CD8-positive, alpha-beta T cell (primary cell): ENCODE measurements at regions of chr20 and their contacts with region 1.

Region 1: GRCh38 chr20:59403261-59403961 is 103.0 kb downstream of the EDN3 start:
- DNase-seq: peak; percentile 57 to 91 (median 73)
- ATAC-seq: peak; percentile 84
- H3K4me3 ChIP-seq: peak overlapping the region; percentile 10 to 47
- H3K4me3 Mint-ChIP-seq: no peak overlapping the region
- H3K27ac ChIP-seq: peak overlapping the region in 1 of 2 experiments; percentile 21
- H3K27ac Mint-ChIP-seq: peak overlapping the region; percentile 81
- H3K4me1 ChIP-seq: peaks cover 38% of the 10 kb centered on the region
- H3K4me1 Mint-ChIP-seq: peaks cover 4% of the 10 kb centered on the region
- H3K27me3 ChIP-seq: peaks cover 7 to 13% of the 10 kb centered on the region in 2 experiments
- H3K27me3 Mint-ChIP-seq: peaks cover 8% of the 10 kb centered on the region
- CTCF ChIP-seq: peak; percentile 99

Region 2: GRCh38 chr20:58481481-58482021 is 921.9 kb before region 1 on chr20:
- CTCF ChIA-PET with region 1: no interaction called
- POLR2A ChIA-PET with region 1: no interaction called
- intact Hi-C with region 1: loop called in 1 of 2 experiments (anchors 5 kb)
- DNase-seq: peak; percentile 24 to 70 (median 49)
- ATAC-seq: peak; percentile 63
- H3K4me3 ChIP-seq: no peak overlapping the region
- H3K4me3 Mint-ChIP-seq: no peak overlapping the region
- H3K27ac ChIP-seq: no peak overlapping the region
- H3K27ac Mint-ChIP-seq: no peak overlapping the region
- H3K4me1 ChIP-seq: no peaks in the 10 kb centered on the region
- H3K4me1 Mint-ChIP-seq: peaks cover 2% of the 10 kb centered on the region
- H3K27me3 ChIP-seq: no peaks in the 10 kb centered on the region
- H3K27me3 Mint-ChIP-seq: peaks cover 13% of the 10 kb centered on the region
- CTCF ChIP-seq: no peak

Region 3: DNA sequence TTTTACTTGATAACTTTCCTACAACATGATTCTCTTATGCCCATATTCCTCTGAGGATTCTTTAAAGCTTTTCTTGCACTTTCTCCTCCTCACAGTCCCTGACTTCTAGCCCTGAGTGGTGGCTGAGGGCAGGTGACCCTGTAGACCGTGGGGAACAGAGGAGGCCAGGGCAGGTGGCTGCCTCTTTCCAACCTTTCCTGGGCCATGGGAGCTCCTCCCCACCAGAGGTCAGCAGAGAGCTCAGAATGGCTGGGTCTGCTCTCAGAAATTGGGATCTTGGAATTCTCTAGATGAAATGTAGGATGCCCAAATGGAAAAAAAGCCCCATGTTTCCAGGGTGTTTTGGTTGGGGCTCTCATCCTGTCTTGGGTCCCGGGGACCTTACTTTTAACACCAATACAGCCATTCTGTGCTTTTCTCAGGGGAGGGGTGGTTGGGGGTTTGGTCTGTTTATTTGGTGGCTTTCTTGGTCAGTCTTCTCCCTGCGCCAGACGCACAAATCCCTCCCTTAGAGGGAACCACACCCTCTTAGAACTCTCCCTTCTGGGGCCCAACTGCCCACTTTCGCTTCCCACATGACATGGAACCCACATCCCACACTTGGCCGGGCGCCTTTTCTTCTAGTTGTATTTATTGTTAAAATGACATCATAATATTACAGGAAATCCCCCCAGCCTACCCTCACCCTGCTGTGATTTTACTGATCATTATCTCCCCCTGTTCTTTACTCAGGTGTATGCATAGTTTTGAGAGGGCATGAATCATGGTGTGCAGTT is 533.0 kb before region 1 on chr20:
- CTCF ChIA-PET with region 1: interaction called, 25 read pairs
- POLR2A ChIA-PET with region 1: no interaction called
- intact Hi-C with region 1: loop called (anchors 1 kb)
- DNase-seq: peak in 7 of 9 experiments; percentile 27 to 75 (median 65)
- ATAC-seq: peak; percentile 81
- H3K4me3 ChIP-seq: no peak overlapping the region
- H3K4me3 Mint-ChIP-seq: no peak overlapping the region
- H3K27ac ChIP-seq: no peak overlapping the region
- H3K27ac Mint-ChIP-seq: no peak overlapping the region
- H3K4me1 ChIP-seq: no peaks in the 10 kb centered on the region
- H3K4me1 Mint-ChIP-seq: peaks cover 5% of the 10 kb centered on the region
- H3K27me3 ChIP-seq: no peaks in the 10 kb centered on the region
- H3K27me3 Mint-ChIP-seq: no peaks in the 10 kb centered on the region
- CTCF ChIP-seq: peak; percentile 73

Region 4: GRCh38 chr20:59082077-59082740 is 321.2 kb before region 1 on chr20:
- CTCF ChIA-PET with region 1: interaction called, 54 read pairs
- POLR2A ChIA-PET with region 1: no interaction called
- intact Hi-C with region 1: loop called in 1 of 2 experiments (anchors 1 kb)
- DNase-seq: peak in 2 of 9 experiments; percentile 27 to 43
- ATAC-seq: no peak
- H3K4me3 ChIP-seq: no peak overlapping the region
- H3K4me3 Mint-ChIP-seq: no peak overlapping the region
- H3K27ac ChIP-seq: no peak overlapping the region
- H3K27ac Mint-ChIP-seq: no peak overlapping the region
- H3K4me1 ChIP-seq: no peaks in the 10 kb centered on the region
- H3K4me1 Mint-ChIP-seq: no peaks in the 10 kb centered on the region
- H3K27me3 ChIP-seq: peaks cover 0 to 4% of the 10 kb centered on the region in 2 experiments
- H3K27me3 Mint-ChIP-seq: peaks cover 3% of the 10 kb centered on the region
- CTCF ChIP-seq: peak; percentile 64

Region 5: DNA sequence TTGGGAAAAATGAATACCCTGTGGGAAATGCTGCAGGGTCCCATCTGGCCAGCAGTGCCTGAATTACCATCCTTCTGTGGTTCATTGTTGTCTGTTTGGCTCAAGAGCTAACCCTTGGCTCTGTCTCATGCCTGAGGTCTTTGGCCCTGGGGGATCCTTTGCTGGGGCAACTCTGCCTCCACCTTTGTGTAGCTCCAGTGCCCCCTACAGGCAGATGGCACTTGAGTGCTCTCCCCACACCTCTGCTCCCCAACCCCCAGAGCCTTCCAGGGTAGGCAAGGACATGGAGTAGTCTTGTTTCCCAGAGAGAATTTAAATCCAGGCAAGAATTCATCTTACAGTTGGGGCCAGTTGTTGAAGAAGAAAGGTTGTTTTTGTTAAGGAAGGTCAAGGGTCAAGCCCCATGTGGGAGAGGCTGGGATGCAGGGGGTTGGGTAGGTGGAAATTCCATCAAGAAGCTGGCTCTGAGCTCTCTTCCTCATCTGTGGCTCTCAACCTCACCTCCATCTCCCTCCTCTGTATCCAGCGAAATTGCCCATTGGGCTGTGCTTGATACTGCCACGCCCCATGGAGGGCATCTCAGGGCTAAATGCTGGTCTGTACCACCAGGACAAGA is 195.6 kb before region 1 on chr20:
- CTCF ChIA-PET with region 1: interaction called, 48 read pairs
- POLR2A ChIA-PET with region 1: no interaction called
- intact Hi-C with region 1: loop called in 1 of 2 experiments (anchors 5 kb)
- DNase-seq: peak; percentile 66 to 90 (median 86)
- ATAC-seq: peak; percentile 96
- H3K4me3 ChIP-seq: no peak overlapping the region
- H3K4me3 Mint-ChIP-seq: no peak overlapping the region
- H3K27ac ChIP-seq: no peak overlapping the region
- H3K27ac Mint-ChIP-seq: peak overlapping the region; percentile 76
- H3K4me1 ChIP-seq: peaks cover 25% of the 10 kb centered on the region
- H3K4me1 Mint-ChIP-seq: peaks cover 37% of the 10 kb centered on the region
- H3K27me3 ChIP-seq: no peaks in the 10 kb centered on the region
- H3K27me3 Mint-ChIP-seq: no peaks in the 10 kb centered on the region
- CTCF ChIP-seq: peak; percentile 93

Region 6: DNA sequence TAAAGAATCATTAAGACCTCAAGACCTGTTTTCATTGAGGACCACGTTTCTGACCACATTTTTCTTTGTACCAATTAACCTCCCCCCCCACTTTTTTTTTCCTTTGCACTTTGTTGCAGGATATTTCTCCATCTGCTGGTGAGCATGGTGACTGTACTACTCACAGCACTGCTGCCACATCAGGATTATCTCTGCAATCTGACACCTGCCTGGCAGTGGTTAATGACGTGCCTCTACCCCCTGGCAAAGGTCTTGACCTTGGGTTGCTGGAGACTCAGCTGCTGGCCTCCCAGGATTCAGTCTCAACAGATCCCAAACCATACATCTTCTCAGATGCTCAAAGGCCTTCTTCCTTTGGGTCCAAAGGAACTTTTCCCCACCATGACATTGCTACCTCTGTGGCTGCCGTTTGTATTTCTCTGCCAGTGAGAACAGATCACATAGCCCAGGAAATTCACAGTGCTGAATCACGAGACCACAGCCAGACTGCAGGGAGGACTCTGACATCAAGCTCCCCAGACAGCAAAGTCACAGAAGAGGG is 149.6 kb before region 1 on chr20:
- CTCF ChIA-PET with region 1: interaction called, 5 read pairs
- POLR2A ChIA-PET with region 1: interaction called, 4 read pairs
- intact Hi-C with region 1: loop called in 1 of 2 experiments (anchors 2 kb)
- DNase-seq: peak in 7 of 9 experiments; percentile 26 to 70 (median 40)
- ATAC-seq: peak; percentile 61
- H3K4me3 ChIP-seq: peak overlapping the region in 1 of 2 experiments; percentile 18
- H3K4me3 Mint-ChIP-seq: peak overlapping the region; percentile 75
- H3K27ac ChIP-seq: peak overlapping the region; percentile 57 to 59
- H3K27ac Mint-ChIP-seq: peak overlapping the region; percentile 98
- H3K4me1 ChIP-seq: peaks cover 53% of the 10 kb centered on the region
- H3K4me1 Mint-ChIP-seq: peaks cover 74% of the 10 kb centered on the region
- H3K27me3 ChIP-seq: no peaks in the 10 kb centered on the region
- H3K27me3 Mint-ChIP-seq: no peaks in the 10 kb centered on the region
- CTCF ChIP-seq: no peak

Region 7: DNA sequence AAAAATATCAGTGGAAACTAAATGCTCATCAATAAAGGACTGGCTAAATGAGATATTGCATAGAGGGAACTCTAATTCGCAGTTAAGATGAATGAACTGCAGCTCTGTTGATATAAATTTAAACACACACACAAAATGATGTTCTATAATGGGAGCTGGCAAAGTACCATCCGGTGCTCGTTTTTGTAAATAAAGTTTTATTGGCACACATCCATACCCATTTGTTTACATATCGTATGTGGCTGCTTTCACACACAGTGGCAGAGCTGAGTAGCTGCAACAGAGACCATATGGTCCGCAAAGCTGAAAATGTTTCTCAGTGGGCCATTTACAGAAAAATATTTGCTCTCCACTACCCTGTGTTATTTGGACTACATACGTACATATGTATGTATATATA is 17.7 kb after region 1 on chr20:
- CTCF ChIA-PET with region 1: interaction called, 12 read pairs
- POLR2A ChIA-PET with region 1: no interaction called
- intact Hi-C with region 1: no loop called
- DNase-seq: no peak
- ATAC-seq: no peak
- H3K4me3 ChIP-seq: no peak overlapping the region
- H3K4me3 Mint-ChIP-seq: no peak overlapping the region
- H3K27ac ChIP-seq: no peak overlapping the region
- H3K27ac Mint-ChIP-seq: no peak overlapping the region
- H3K4me1 ChIP-seq: no peaks in the 10 kb centered on the region
- H3K4me1 Mint-ChIP-seq: no peaks in the 10 kb centered on the region
- H3K27me3 ChIP-seq: no peaks in the 10 kb centered on the region
- H3K27me3 Mint-ChIP-seq: peaks cover 16% of the 10 kb centered on the region
- CTCF ChIP-seq: no peak

Region 8: GRCh38 chr20:59481067-59481466 is 77.7 kb after region 1 on chr20:
- CTCF ChIA-PET with region 1: no interaction called
- POLR2A ChIA-PET with region 1: no interaction called
- intact Hi-C with region 1: no loop called
- DNase-seq: no peak
- ATAC-seq: no peak
- H3K4me3 ChIP-seq: no peak overlapping the region
- H3K4me3 Mint-ChIP-seq: no peak overlapping the region
- H3K27ac ChIP-seq: no peak overlapping the region
- H3K27ac Mint-ChIP-seq: no peak overlapping the region
- H3K4me1 ChIP-seq: no peaks in the 10 kb centered on the region
- H3K4me1 Mint-ChIP-seq: no peaks in the 10 kb centered on the region
- H3K27me3 ChIP-seq: peaks cover 0 to 3% of the 10 kb centered on the region in 2 experiments
- H3K27me3 Mint-ChIP-seq: peaks cover 32% of the 10 kb centered on the region
- CTCF ChIP-seq: no peak

Region 9: DNA sequence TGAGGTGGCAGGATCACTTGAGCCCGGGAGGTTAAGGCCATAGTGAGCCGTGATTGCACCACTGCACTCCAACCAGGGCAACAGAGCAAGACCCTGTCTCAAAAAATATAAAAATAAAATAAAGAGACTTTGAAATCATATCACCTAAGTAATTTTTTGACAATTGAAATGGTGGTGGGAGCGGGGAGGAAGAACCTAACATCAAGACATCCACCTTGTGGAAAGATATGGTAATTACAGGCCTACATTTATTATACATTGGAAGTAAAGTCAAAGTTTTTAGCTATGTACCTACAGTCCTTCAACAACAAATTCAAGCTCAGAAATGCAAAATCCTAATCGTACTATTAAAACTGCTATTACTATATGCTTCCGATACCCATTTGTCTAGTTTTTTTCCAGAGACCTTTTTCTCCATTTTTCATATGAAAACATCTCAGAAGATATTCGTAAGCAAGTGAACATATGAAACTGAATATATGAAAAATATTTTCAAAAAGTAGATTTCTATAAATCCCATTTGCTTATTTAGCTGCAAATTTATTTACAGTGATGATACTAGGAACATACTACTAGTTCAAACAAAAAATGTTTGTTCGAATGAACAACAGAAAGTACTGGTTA is 446.7 kb after region 1 on chr20:
- CTCF ChIA-PET with region 1: no interaction called
- POLR2A ChIA-PET with region 1: no interaction called
- intact Hi-C with region 1: no loop called
- DNase-seq: peak in 2 of 9 experiments; percentile 7 to 20
- ATAC-seq: no peak
- H3K4me3 ChIP-seq: no peak overlapping the region
- H3K4me3 Mint-ChIP-seq: no peak overlapping the region
- H3K27ac ChIP-seq: no peak overlapping the region
- H3K27ac Mint-ChIP-seq: no peak overlapping the region
- H3K4me1 ChIP-seq: no peaks in the 10 kb centered on the region
- H3K4me1 Mint-ChIP-seq: no peaks in the 10 kb centered on the region
- H3K27me3 ChIP-seq: no peaks in the 10 kb centered on the region
- H3K27me3 Mint-ChIP-seq: peaks cover 2% of the 10 kb centered on the region
- CTCF ChIP-seq: peak; percentile 62